Naive thymus-derived CD4-positive, alpha-beta T cell (primary cell): ENCODE measurements at regions of chr4 and their contacts with region 1.

Region 1: DNA sequence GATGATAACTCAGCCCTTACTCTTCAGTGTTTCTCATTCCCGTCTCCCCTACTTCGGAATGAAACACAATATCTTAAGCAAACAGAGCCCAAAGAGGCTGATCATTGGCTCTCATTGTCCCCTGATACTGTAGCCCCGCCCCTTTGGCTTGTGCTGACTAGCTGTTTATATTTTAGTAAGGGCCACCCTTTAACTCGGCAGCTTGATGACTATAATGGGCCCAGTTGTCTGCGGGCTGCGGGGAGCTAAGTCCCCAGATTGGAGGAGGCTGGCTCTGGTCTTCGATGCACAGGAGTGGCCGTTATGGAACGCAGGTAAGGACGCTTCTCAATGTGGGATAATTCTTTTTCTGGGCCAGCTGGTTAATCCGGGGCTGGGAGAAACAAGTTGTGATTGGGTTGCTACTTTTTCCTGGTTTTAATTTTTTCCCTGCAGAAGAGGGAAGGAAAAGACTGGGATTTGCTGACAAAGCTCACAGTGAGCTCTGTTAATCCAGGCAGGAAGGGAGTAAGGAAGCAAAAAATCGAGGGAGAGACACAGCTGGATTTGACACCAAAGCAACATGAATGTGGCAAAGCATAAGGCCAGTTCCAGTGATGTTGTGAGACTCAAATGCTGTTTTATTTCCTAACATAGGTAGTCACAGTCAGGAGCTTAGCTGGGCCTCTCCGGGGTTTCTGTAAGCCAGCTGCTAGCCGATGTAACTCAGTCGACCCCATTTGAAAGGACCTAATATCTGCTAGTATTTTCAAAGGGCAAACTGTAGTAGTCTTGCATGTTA is at the start of gene TRIM2:
- DNase-seq: no peak
- ATAC-seq: no peak
- H3K4me3 ChIP-seq: peak within 1 kb of the TSS; percentile 38
- H3K4me3 Mint-ChIP-seq: peak within 1 kb of the TSS; percentile 42 to 76 (median 70)
- H3K27ac ChIP-seq: no peak within 1 kb of the TSS
- H3K27ac Mint-ChIP-seq: peak within 1 kb of the TSS in 6 of 9 donors; percentile 17 to 81 (median 38)
- H3K4me1 ChIP-seq: peaks cover 12 to 18% of the 10 kb centered on the region in 2 donors
- H3K4me1 Mint-ChIP-seq: peaks cover 5 to 24% (median 18%) of the 10 kb centered on the region in 7 donors
- H3K27me3 ChIP-seq: no peaks in the 10 kb centered on the region
- H3K27me3 Mint-ChIP-seq: peaks cover 0 to 2% (median 0%) of the 10 kb centered on the region in 5 donors
- total RNA-seq, gene TRIM2: 0.12 to 3.9 (median 2.3) TPM

Region 2: GRCh38 chr4:152860051-152860450 is 344.4 kb before region 1 on chr4:
- CTCF ChIA-PET with region 1: no interaction called
- POLR2A ChIA-PET with region 1: no interaction called
- intact Hi-C with region 1: no loop called
- DNase-seq: no peak
- ATAC-seq: no peak
- H3K4me3 ChIP-seq: no peak overlapping the region
- H3K4me3 Mint-ChIP-seq: no peak overlapping the region
- H3K27ac ChIP-seq: no peak overlapping the region
- H3K27ac Mint-ChIP-seq: no peak overlapping the region
- H3K4me1 ChIP-seq: no peaks in the 10 kb centered on the region
- H3K4me1 Mint-ChIP-seq: no peaks in the 10 kb centered on the region
- H3K27me3 ChIP-seq: no peaks in the 10 kb centered on the region
- H3K27me3 Mint-ChIP-seq: no peaks in the 10 kb centered on the region

Region 3: DNA sequence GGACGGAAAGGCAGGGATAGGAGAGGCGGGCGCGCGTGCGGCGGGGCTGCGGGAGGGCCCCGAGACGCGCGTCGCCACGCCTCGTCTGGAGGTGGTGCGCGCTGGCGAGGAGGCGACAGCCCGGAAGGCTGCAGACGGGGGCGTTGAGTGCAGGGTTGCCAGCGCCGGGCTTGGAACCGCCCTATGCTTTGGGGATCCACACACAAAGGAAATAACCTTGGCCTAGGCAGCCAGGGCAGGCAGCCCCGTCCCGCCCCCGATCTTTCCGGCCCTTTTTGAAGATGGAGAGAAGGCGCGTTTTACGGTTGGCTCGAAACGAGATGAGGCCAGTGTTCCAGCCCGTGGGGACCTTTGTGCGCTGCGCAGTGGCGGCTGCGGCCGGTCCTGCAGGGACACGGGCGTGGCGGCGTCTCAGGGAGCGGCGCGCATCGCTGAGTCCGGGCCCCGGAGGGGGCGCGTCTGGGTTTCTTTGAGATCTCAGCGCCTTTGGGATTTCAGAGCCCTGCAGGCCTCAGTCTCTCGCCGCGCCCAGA is 51.0 kb before region 1 on chr4:
- CTCF ChIA-PET with region 1: no interaction called
- POLR2A ChIA-PET with region 1: interaction called, 3 read pairs
- intact Hi-C with region 1: loop called in 1 of 2 experiments (anchors 5 kb)
- DNase-seq: peak; percentile 53 to 84 (median 78)
- ATAC-seq: peak; percentile 95
- H3K4me3 ChIP-seq: peak overlapping the region; percentile 81
- H3K4me3 Mint-ChIP-seq: peak overlapping the region; percentile 91 to 96 (median 92)
- H3K27ac ChIP-seq: peak overlapping the region; percentile 69
- H3K27ac Mint-ChIP-seq: peak overlapping the region; percentile 78 to 90 (median 85)
- H3K4me1 ChIP-seq: peaks cover 3 to 12% of the 10 kb centered on the region in 2 donors
- H3K4me1 Mint-ChIP-seq: peaks cover 23 to 42% (median 38%) of the 10 kb centered on the region in 7 donors
- H3K27me3 ChIP-seq: no peaks in the 10 kb centered on the region
- H3K27me3 Mint-ChIP-seq: peaks cover 0 to 43% (median 0%) of the 10 kb centered on the region in 5 donors

Region 4: GRCh38 chr4:153221783-153222706 is 17.6 kb after region 1 on chr4:
- CTCF ChIA-PET with region 1: no interaction called
- POLR2A ChIA-PET with region 1: interaction called, 3 read pairs
- intact Hi-C with region 1: loop called in 1 of 2 experiments (anchors 1 kb)
- DNase-seq: peak in 8 of 9 donors; percentile 19 to 42 (median 31)
- ATAC-seq: peak; percentile 65
- H3K4me3 ChIP-seq: peak overlapping the region; percentile 62
- H3K4me3 Mint-ChIP-seq: peak overlapping the region; percentile 86 to 96 (median 92)
- H3K27ac ChIP-seq: peak overlapping the region; percentile 60
- H3K27ac Mint-ChIP-seq: peak overlapping the region in 8 of 9 donors; percentile 42 to 88 (median 76)
- H3K4me1 ChIP-seq: peaks cover 0 to 24% of the 10 kb centered on the region in 2 donors
- H3K4me1 Mint-ChIP-seq: peaks cover 23 to 48% (median 42%) of the 10 kb centered on the region in 7 donors
- H3K27me3 ChIP-seq: no peaks in the 10 kb centered on the region
- H3K27me3 Mint-ChIP-seq: peaks cover 0 to 66% (median 3%) of the 10 kb centered on the region in 5 donors